ENCODE measurements at regions of chr12 and their contacts with region 1.

Region 1: DNA sequence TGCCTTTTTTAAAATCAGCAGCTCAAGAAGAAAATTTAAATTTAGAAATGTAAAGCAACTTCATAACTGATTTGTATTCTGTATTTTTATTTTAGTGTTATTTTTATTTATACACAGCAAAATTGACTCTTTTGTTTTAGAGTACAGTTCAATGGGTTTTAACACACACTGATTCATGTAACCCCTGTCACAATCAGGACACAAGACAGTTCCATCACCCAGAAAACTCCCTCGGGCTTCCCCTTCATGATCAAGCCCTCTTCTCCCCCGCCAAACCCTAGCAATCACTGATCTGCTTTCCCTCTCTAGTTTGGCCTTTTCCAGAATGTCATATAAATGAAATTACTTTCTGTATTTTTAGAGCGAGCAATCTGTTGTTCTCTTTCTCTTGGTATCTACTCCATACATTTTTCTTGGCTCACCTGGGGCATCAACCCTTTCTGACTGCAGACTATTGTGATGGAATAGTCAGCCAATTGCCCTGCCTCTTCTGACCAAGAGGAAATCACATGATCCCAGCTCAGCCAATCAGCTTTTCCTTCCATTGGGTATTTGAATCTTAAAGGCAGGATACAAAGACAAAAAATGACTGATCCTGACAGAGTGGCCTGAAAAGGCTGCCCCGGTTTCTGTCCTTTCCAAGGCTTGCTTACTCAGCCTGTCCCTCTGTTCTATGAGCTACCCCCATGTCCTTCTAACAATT is 5.3 kb downstream of the SLC5A8 start:
- DNase-seq: no peak
- H3K4me3 ChIP-seq: no peak overlapping the region
- H3K27ac ChIP-seq: no peak overlapping the region
- H3K4me1 ChIP-seq: no peaks in the 10 kb centered on the region
- H3K27me3 ChIP-seq: no peaks in the 10 kb centered on the region
- CTCF ChIP-seq: no peak
- POLR2A ChIP-seq: no peak

Region 2: GRCh38 chr12:100372853-100373645 is 831.7 kb before region 1 on chr12:
- CTCF ChIA-PET with region 1: no interaction called
- POLR2A ChIA-PET with region 1: no interaction called
- dilution Hi-C with region 1: no loop called
- intact Hi-C with region 1: loop called (anchors 5 kb)
- DNase-seq: no peak
- H3K4me3 ChIP-seq: no peak overlapping the region
- H3K27ac ChIP-seq: no peak overlapping the region
- H3K4me1 ChIP-seq: no peaks in the 10 kb centered on the region
- H3K27me3 ChIP-seq: no peaks in the 10 kb centered on the region
- CTCF ChIP-seq: no peak
- POLR2A ChIP-seq: no peak

Measured in endothelial cell of umbilical vein (primary cell).